Cardiac septum (tissue), 1 donor: ENCODE measurements at regions of chr1 and their contacts with region 1.

Region 1: GRCh38 chr1:150372580-150372979 is 8.6 kb downstream of the RPRD2 start:
- DNase-seq: no peak

Region 2: DNA sequence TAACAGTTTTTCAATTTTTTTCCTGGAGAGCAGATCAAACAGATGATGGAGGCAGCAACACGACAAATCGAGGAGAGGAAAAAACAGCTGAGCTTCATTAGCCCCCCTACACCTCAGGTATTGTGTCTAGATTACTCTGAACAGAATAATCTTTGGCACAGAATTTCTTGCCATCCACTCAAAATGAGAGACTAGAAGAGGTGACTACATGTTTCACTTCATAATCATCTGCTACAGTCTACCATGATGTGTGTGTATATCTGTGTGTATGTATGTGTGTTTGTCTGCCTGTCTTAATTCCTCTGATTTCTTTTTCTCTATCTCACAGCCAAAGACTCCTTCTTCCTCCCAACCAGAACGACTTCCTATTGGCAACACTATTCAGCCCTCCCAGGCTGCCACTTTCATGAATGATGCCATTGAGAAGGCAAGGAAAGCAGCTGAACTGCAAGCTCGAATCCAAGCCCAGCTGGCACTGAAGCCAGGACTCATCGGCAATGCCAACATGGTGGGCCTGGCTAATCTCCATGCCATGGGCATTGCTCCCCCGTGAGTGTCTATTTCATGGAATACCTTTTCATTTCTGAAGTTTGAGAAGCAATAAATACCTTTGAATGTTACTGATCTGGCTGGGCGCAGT is 39.8 kb before region 1 on chr1:
- intact Hi-C with region 1: no loop called
- DNase-seq: no peak

Region 3: DNA sequence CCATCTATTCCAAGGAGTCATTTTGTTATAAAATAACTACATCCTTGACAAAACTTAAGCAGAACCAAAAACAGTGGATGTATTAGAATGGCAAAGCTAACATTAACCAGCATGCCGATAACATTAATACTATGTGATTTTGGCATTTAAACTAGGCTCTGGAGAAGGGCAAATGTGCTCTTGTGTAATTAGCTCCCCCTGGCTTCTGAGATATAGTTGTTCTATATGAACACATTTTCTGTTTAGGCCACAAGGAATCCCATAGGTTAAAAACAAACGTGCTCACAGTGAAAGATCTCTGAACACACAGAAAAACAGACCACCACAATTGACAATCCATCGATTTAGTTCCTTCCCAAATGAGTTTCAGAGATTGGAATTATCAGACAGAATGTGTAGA is 57.2 kb after region 1 on chr1:
- intact Hi-C with region 1: loop called (anchors 10 kb)
- DNase-seq: no peak

Region 4: GRCh38 chr1:150765296-150765976 is 392.9 kb after region 1 on chr1 and contains the start of gene CTSS:
- intact Hi-C with region 1: no loop called
- DNase-seq: no peak
- total RNA-seq, gene CTSS: 18.9 TPM